ENCODE measurements at regions of chr5 and their contacts with region 1.

Region 1: GRCh38 chr5:77867194-77867691 is 91.1 kb upstream of the TBCA start:
- DNase-seq: no peak
- ATAC-seq: peak; percentile 78
- H3K4me3 ChIP-seq: no peak overlapping the region
- H3K27ac ChIP-seq: no peak overlapping the region
- H3K4me1 ChIP-seq: no peaks in the 10 kb centered on the region
- H3K27me3 ChIP-seq: no peaks in the 10 kb centered on the region
- CTCF ChIP-seq: peak in 2 of 3 experiments; percentile 27 to 39; a peak in 4 of 6 replicates
- EP300 ChIP-seq: no peak
- POLR2A ChIP-seq: no peak
- RAD21 ChIP-seq: 0 out of 2 replicates have a peak, but pooled peaks have one; percentile 26

Region 2: GRCh38 chr5:77852514-77853352 is 14.5 kb before region 1 on chr5:
- CTCF ChIA-PET with region 1: interaction called, 13 read pairs
- POLR2A ChIA-PET with region 1: interaction called, 10 read pairs
- RAD21 ChIA-PET with region 1: interaction called, 12 read pairs
- SMC1A ChIA-PET with region 1: interaction called, 11 read pairs
- in situ Hi-C with region 1: no loop called
- intact Hi-C with region 1: no loop called
- DNase-seq: peak; percentile 80
- ATAC-seq: peak; percentile 94
- H3K4me3 ChIP-seq: peak overlapping the region; percentile 76
- H3K27ac ChIP-seq: peak overlapping the region; percentile 78
- H3K4me1 ChIP-seq: peaks cover 3% of the 10 kb centered on the region; the same call in 1 of the 2 replicates
- H3K27me3 ChIP-seq: no peaks in the 10 kb centered on the region
- CTCF ChIP-seq: no peak
- EP300 ChIP-seq: 0 out of 4 replicates have a peak, but pooled peaks have one; percentile 18 to 30
- POLR2A ChIP-seq: peak; percentile 59
- RAD21 ChIP-seq: no peak; the same call in 1 of the 2 replicates

Region 3: DNA sequence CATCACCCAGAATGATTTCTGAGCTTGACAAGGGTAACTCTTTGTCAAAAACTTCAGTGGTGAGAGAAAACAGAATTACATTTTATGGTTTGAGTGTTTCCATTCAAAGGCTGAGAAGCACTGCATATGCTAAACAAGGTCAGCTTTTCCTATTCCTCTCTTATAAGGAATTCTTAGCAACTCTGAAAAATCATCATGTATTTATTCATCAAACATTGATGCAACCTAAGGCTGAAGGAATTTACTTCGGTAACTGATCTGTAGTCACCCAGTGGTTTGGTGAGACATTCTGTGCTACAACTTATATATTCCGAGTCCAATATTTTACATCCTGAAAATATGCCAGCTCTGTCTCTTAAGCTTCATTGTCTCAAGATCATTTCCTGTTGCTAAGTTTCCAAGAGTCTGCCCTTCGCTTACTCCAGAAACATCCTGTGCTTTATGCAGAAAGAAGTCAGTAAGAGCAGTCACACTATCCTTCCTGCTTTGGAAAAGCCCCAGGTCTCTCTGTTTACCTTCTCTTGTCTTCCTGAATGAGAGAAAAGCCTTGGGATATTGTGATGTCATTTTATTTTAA is 85.5 kb after region 1 on chr5:
- CTCF ChIA-PET with region 1: no interaction called
- POLR2A ChIA-PET with region 1: no interaction called
- RAD21 ChIA-PET with region 1: no interaction called
- SMC1A ChIA-PET with region 1: no interaction called
- in situ Hi-C with region 1: no loop called
- intact Hi-C with region 1: no loop called
- DNase-seq: no peak
- ATAC-seq: no peak
- H3K4me3 ChIP-seq: no peak overlapping the region
- H3K27ac ChIP-seq: no peak overlapping the region
- H3K4me1 ChIP-seq: no peaks in the 10 kb centered on the region
- H3K27me3 ChIP-seq: no peaks in the 10 kb centered on the region
- CTCF ChIP-seq: no peak
- EP300 ChIP-seq: no peak
- POLR2A ChIP-seq: no peak
- RAD21 ChIP-seq: no peak

Region 4: DNA sequence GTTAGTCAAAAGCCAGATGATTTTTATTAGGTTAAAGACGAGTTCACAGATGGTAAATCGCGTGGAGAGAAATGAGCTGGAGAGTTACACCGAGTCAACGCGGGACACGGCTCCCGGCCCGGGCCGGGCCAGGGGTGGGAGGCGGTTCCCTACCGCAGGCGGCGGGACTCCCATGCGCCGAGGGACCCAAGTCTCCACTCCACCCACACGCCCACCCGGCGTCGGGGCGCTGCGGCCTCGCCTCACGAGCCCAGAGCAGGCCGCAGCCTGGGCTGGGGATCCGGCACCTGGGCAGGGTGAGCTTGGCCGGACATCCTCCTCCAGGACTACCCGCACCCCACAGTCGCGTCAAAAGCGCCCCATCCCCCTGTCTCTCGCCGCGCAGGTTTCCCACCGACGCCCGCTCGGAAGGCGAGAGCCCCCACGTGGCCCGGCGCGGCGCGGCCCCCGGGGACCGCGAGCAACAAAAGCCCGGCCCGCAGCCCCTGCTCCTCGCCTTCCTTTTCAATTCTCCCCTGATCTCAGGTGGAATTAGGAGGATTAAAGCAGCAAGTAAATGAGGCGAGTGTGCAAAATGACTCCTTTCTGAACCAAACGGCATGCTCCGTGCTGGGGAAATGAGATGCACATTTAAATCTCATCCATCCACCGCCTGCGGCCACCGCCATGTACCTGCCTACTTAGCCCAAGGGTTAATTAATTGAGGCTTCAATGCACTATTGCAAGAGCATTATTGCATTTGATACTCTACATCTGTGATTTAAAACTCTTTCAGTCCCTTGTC is 105.4 kb after region 1 on chr5:
- CTCF ChIA-PET with region 1: interaction called, 5 read pairs
- POLR2A ChIA-PET with region 1: no interaction called
- RAD21 ChIA-PET with region 1: interaction called, 7 read pairs
- SMC1A ChIA-PET with region 1: interaction called, 4 read pairs
- in situ Hi-C with region 1: no loop called
- intact Hi-C with region 1: loop called (anchors 10 kb)
- DNase-seq: no peak
- ATAC-seq: peak; percentile 91
- H3K4me3 ChIP-seq: peak overlapping the region; percentile 61
- H3K27ac ChIP-seq: no peak overlapping the region
- H3K4me1 ChIP-seq: peaks cover 8% of the 10 kb centered on the region
- H3K27me3 ChIP-seq: 0 out of 4 replicates have a peak, but pooled peaks cover 0 to 4% of the 10 kb centered on the region in 2 experiments
- CTCF ChIP-seq: peak; percentile 50 to 53 (median 51); a peak in 5 of 6 replicates
- EP300 ChIP-seq: no peak
- POLR2A ChIP-seq: no peak
- RAD21 ChIP-seq: peak; percentile 76

Region 5: GRCh38 chr5:78008356-78008967 is 141.2 kb after region 1 on chr5:
- CTCF ChIA-PET with region 1: interaction called, 5 read pairs
- POLR2A ChIA-PET with region 1: no interaction called
- RAD21 ChIA-PET with region 1: no interaction called
- SMC1A ChIA-PET with region 1: interaction called, 6 read pairs
- in situ Hi-C with region 1: no loop called
- intact Hi-C with region 1: loop called (anchors 1 kb)
- DNase-seq: no peak
- ATAC-seq: peak; percentile 84
- H3K4me3 ChIP-seq: no peak overlapping the region
- H3K27ac ChIP-seq: no peak overlapping the region
- H3K4me1 ChIP-seq: peaks cover 3% of the 10 kb centered on the region; the same call in 1 of the 2 replicates
- H3K27me3 ChIP-seq: no peaks in the 10 kb centered on the region
- CTCF ChIP-seq: peak; percentile 77 to 83 (median 79)
- EP300 ChIP-seq: no peak
- POLR2A ChIP-seq: no peak
- RAD21 ChIP-seq: peak; percentile 89

Region 6: GRCh38 chr5:78162253-78162862 is 295.1 kb after region 1 on chr5:
- CTCF ChIA-PET with region 1: interaction called, 6 read pairs
- POLR2A ChIA-PET with region 1: no interaction called
- RAD21 ChIA-PET with region 1: interaction called, 3 read pairs
- SMC1A ChIA-PET with region 1: no interaction called
- in situ Hi-C with region 1: no loop called
- intact Hi-C with region 1: loop called (anchors 5 kb)
- DNase-seq: no peak
- ATAC-seq: peak; percentile 61
- H3K4me3 ChIP-seq: no peak overlapping the region
- H3K27ac ChIP-seq: no peak overlapping the region
- H3K4me1 ChIP-seq: no peaks in the 10 kb centered on the region
- H3K27me3 ChIP-seq: no peaks in the 10 kb centered on the region
- CTCF ChIP-seq: peak; percentile 47 to 66 (median 47); a peak in 5 of 6 replicates
- EP300 ChIP-seq: no peak
- POLR2A ChIP-seq: no peak
- RAD21 ChIP-seq: peak; percentile 82

Measured in GM12878 (cell line).